CD4-positive, alpha-beta memory T cell (primary cell): ENCODE measurements at regions of chr20 and their contacts with region 1.

Region 1: DNA sequence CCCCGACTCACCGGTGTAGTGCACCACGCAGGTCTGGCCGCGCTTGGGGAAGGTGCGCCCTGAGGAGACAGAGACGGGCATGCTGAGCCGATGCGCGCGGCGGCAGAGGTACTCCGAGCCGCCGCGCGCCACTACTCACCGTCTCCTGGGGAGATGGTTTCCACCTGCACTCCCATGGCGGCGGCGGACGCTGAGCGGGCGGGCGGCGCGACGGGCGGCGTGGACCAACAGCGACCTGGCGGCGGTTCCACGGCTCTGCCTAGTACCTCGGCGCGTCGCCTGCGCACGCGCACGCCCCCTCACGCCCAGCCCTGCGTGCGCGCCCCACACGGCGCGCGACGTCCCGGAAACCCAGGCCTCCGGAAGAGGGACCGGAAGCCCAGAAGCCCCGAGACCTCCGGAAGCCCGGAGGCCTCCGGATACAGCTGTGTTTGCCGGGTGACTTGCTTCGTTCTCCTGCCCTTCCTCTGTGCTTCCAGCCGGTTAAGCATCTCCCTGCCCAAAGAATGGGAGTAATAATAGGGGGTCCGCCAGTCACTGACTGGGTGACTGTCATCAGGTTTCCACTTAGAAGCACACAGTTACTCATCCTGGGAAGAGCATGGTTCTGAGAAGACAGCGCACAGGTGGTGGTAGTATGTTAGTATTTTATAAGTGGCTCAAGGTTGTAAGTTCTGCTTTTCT is at the start of gene FKBP1A:
- DNase-seq: peak; percentile 90 to 91 (median 90)
- H3K4me3 ChIP-seq: peak within 1 kb of the TSS; percentile 58 to 80
- H3K4me3 Mint-ChIP-seq: peak within 1 kb of the TSS; percentile 87 to 98 (median 96)
- H3K27ac ChIP-seq: peak within 1 kb of the TSS; percentile 67
- H3K27ac Mint-ChIP-seq: peak within 1 kb of the TSS; percentile 88 to 98 (median 96)
- H3K4me1 ChIP-seq: peaks cover 51% of the 10 kb centered on the region
- H3K4me1 Mint-ChIP-seq: peaks cover 52 to 76% (median 63%) of the 10 kb centered on the region in 4 donors
- H3K27me3 ChIP-seq: no peaks in the 10 kb centered on the region
- H3K27me3 Mint-ChIP-seq: no peaks in the 10 kb centered on the region
- total RNA-seq, gene FKBP1A: 77.8 to 86.4 TPM

Region 2: GRCh38 chr20:844473-845225 is 548.3 kb before region 1 on chr20:
- CTCF ChIA-PET with region 1: no interaction called
- POLR2A ChIA-PET with region 1: no interaction called
- intact Hi-C with region 1: loop called (anchors 10 kb)
- DNase-seq: peak; percentile 81 to 96 (median 86)
- H3K4me3 ChIP-seq: peak overlapping the region; percentile 67 to 74
- H3K4me3 Mint-ChIP-seq: peak overlapping the region; percentile 87 to 93 (median 90)
- H3K27ac ChIP-seq: peak overlapping the region; percentile 70
- H3K27ac Mint-ChIP-seq: peak overlapping the region; percentile 70 to 89 (median 83)
- H3K4me1 ChIP-seq: peaks cover 68% of the 10 kb centered on the region
- H3K4me1 Mint-ChIP-seq: peaks cover 27 to 62% (median 45%) of the 10 kb centered on the region in 4 donors
- H3K27me3 ChIP-seq: no peaks in the 10 kb centered on the region
- H3K27me3 Mint-ChIP-seq: no peaks in the 10 kb centered on the region

Region 3: DNA sequence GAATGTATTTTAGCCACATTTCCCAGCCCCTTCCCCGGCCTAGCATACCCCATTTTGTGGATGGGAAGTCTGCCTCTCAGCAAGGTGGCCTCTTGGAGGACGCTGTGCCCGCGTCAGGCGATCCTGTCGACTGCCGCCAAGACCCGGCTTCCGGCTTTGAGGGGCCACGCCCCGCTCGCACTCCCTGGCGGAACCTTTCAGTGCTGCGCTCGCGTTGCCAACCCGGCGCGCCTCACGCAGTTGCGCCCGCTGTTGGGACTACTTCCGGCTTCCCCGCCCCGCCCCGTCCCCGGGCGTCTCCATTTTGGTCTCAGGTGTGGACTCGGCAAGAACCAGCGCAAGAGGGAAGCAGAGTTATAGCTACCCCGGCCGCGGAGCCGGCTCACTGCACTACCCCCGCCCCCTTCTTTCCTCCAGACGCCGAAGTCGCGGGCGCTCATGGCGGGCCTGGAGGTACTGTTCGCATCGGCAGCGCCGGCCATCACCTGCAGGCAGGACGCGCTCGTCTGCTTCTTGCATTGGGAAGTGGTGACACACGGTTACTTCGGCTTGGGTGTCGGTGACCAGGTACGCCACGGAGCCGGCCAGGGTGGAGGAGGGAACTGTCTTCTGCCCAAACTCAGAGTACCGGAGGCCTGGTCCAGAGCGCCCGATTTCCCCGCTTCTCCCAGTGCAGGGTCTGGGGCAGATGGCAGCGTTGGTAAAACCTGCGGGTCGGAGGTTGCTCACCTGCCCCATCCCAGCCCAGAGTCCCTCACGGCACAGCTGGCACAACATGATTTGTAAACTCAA is 274.4 kb before region 1 on chr20 and contains the start of gene PSMF1:
- CTCF ChIA-PET with region 1: no interaction called
- POLR2A ChIA-PET with region 1: no interaction called
- intact Hi-C with region 1: loop called (anchors 1 kb)
- DNase-seq: peak; percentile 95 to 98 (median 96)
- H3K4me3 ChIP-seq: peak within 1 kb of the TSS; percentile 85 to 99
- H3K4me3 Mint-ChIP-seq: peak within 1 kb of the TSS; percentile 91 to 97 (median 95)
- H3K27ac ChIP-seq: peak within 1 kb of the TSS; percentile 78
- H3K27ac Mint-ChIP-seq: peak within 1 kb of the TSS; percentile 91 to 97 (median 95)
- H3K4me1 ChIP-seq: peaks cover 52% of the 10 kb centered on the region
- H3K4me1 Mint-ChIP-seq: peaks cover 47 to 70% (median 58%) of the 10 kb centered on the region in 4 donors
- H3K27me3 ChIP-seq: no peaks in the 10 kb centered on the region
- H3K27me3 Mint-ChIP-seq: no peaks in the 10 kb centered on the region
- total RNA-seq, gene PSMF1: 118 to 123 TPM

Region 4: GRCh38 chr20:1225783-1226654 is 166.9 kb before region 1 on chr20 and contains the start of gene RAD21L1:
- CTCF ChIA-PET with region 1: no interaction called
- POLR2A ChIA-PET with region 1: no interaction called
- intact Hi-C with region 1: loop called (anchors 5 kb)
- DNase-seq: peak; percentile 52 to 81 (median 60)
- H3K4me3 ChIP-seq: peak within 1 kb of the TSS; percentile 44 to 59
- H3K4me3 Mint-ChIP-seq: peak within 1 kb of the TSS; percentile 82 to 91 (median 87)
- H3K27ac ChIP-seq: peak within 1 kb of the TSS; percentile 25
- H3K27ac Mint-ChIP-seq: peak within 1 kb of the TSS; percentile 68 to 91 (median 82)
- H3K4me1 ChIP-seq: peaks cover 17% of the 10 kb centered on the region
- H3K4me1 Mint-ChIP-seq: peaks cover 2 to 18% (median 10%) of the 10 kb centered on the region in 4 donors
- H3K27me3 ChIP-seq: peaks cover 10% of the 10 kb centered on the region
- H3K27me3 Mint-ChIP-seq: peaks cover 4 to 10% of the 10 kb centered on the region in 2 donors
- total RNA-seq, gene RAD21L1: 0.78 TPM in 1 of 2 experiments, not detected in the other

Region 5: DNA sequence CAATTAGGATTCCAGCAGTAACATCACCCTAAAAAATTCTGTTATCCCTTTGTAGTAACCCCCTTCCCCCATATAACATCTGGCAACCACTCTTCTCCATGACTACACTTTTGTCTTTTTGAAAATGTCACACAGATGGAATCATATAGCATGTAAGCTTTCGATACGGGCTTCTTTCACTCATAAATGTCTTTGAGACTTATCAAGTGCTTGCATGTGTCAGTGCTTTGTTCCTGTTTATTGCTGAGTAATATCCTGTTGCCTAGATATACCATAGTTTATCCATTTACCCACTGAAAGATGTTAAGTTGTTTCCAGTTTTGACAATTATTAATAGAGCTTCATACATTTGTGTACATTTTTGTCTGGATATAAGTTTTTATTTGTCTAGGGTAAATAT is 137.3 kb before region 1 on chr20:
- CTCF ChIA-PET with region 1: no interaction called
- POLR2A ChIA-PET with region 1: no interaction called
- intact Hi-C with region 1: no loop called
- DNase-seq: no peak
- H3K4me3 ChIP-seq: no peak overlapping the region
- H3K4me3 Mint-ChIP-seq: no peak overlapping the region
- H3K27ac ChIP-seq: no peak overlapping the region
- H3K27ac Mint-ChIP-seq: no peak overlapping the region
- H3K4me1 ChIP-seq: peaks cover 3% of the 10 kb centered on the region
- H3K4me1 Mint-ChIP-seq: peaks cover 4 to 11% (median 6%) of the 10 kb centered on the region in 4 donors
- H3K27me3 ChIP-seq: peaks cover 23% of the 10 kb centered on the region
- H3K27me3 Mint-ChIP-seq: peaks cover 3 to 6% of the 10 kb centered on the region in 2 donors

Region 6: DNA sequence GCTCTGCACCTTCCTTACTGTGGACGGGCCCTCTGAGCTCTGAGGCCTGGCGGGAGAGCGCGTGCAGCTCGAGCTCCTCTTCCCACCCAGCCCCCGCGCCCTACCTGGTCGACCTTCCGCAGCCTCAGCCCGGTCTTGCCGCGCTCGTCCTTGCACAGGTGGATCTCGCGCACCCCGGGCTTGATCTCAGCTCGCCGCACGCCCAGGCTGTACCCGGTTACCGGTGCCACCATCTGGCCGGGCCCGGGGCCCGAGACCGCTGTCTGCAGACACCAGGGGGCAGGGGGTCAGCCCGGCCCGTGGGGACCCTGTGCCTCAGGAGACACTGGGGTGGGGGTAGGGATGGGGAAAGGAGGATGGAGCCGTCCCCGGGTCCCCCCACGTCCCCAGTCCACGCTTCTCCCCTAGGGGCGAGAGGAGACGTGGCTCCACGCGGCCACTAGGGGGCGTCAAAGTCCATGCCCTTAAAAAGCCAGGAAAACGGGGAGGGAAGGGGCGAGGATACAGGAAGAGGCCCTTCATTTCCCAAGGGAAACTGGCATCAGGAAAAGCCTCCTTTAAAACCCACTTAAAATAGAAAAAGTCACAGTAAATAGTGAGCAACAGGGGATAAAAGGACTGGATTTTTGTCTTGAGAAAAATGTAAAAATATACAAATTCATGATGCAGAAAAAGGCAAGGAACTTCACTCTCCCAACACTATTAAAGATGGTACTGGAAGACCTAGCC is 79.6 kb before region 1 on chr20:
- CTCF ChIA-PET with region 1: interaction called, 6 read pairs
- POLR2A ChIA-PET with region 1: interaction called, 3 read pairs
- intact Hi-C with region 1: loop called (anchors 5 kb)
- DNase-seq: peak; percentile 54 to 59 (median 54)
- H3K4me3 ChIP-seq: no peak overlapping the region
- H3K4me3 Mint-ChIP-seq: no peak overlapping the region
- H3K27ac ChIP-seq: no peak overlapping the region
- H3K27ac Mint-ChIP-seq: peak overlapping the region in 1 of 7 donors; percentile 54
- H3K4me1 ChIP-seq: peaks cover 8% of the 10 kb centered on the region
- H3K4me1 Mint-ChIP-seq: peaks cover 4 to 10% (median 7%) of the 10 kb centered on the region in 4 donors
- H3K27me3 ChIP-seq: no peaks in the 10 kb centered on the region
- H3K27me3 Mint-ChIP-seq: no peaks in the 10 kb centered on the region

Region 7: GRCh38 chr20:1325173-1326030 is 67.6 kb before region 1 on chr20:
- CTCF ChIA-PET with region 1: interaction called, 3 read pairs
- POLR2A ChIA-PET with region 1: interaction called, 13 read pairs
- intact Hi-C with region 1: loop called (anchors 1 kb)
- DNase-seq: peak; percentile 98 to 99 (median 98)
- H3K4me3 ChIP-seq: peak overlapping the region; percentile 58 to 85
- H3K4me3 Mint-ChIP-seq: no peak overlapping the region
- H3K27ac ChIP-seq: peak overlapping the region; percentile 98
- H3K27ac Mint-ChIP-seq: no peak overlapping the region
- H3K4me1 ChIP-seq: peaks cover 42% of the 10 kb centered on the region
- H3K4me1 Mint-ChIP-seq: peaks cover 14 to 24% (median 19%) of the 10 kb centered on the region in 4 donors
- H3K27me3 ChIP-seq: no peaks in the 10 kb centered on the region
- H3K27me3 Mint-ChIP-seq: no peaks in the 10 kb centered on the region

Region 8: DNA sequence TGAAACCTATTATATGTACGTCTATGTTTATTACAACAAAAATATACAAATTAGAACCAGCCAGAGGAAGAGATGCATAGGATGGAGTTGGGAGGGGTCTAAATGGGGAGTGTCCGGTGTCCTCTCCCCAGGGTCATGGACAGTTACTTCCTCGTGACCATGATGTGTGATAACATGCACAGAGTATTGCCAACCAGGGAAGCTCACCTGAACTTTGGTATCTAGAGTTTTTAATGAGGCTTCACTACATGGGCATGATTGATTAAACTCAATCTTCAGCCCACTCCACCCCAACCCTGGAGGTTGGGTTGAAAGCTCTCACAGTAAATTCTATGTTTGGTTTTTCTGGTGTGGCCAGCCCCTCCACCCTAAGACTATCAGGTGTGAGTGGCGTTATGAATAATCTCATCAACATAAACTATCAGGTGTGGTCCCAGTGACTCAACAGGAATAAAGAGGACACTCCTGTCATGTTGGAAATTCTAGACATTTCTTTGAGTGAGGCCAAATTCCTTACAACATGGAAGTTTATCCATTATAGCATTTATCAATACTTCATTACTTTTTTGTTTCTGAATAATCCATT is 36.3 kb after region 1 on chr20:
- CTCF ChIA-PET with region 1: no interaction called
- POLR2A ChIA-PET with region 1: no interaction called
- intact Hi-C with region 1: no loop called
- DNase-seq: no peak
- H3K4me3 ChIP-seq: no peak overlapping the region
- H3K4me3 Mint-ChIP-seq: no peak overlapping the region
- H3K27ac ChIP-seq: no peak overlapping the region
- H3K27ac Mint-ChIP-seq: no peak overlapping the region
- H3K4me1 ChIP-seq: peaks cover 2% of the 10 kb centered on the region
- H3K4me1 Mint-ChIP-seq: peaks cover 1 to 17% (median 4%) of the 10 kb centered on the region in 4 donors
- H3K27me3 ChIP-seq: no peaks in the 10 kb centered on the region
- H3K27me3 Mint-ChIP-seq: peaks cover 0 to 7% of the 10 kb centered on the region in 2 donors

Region 9: DNA sequence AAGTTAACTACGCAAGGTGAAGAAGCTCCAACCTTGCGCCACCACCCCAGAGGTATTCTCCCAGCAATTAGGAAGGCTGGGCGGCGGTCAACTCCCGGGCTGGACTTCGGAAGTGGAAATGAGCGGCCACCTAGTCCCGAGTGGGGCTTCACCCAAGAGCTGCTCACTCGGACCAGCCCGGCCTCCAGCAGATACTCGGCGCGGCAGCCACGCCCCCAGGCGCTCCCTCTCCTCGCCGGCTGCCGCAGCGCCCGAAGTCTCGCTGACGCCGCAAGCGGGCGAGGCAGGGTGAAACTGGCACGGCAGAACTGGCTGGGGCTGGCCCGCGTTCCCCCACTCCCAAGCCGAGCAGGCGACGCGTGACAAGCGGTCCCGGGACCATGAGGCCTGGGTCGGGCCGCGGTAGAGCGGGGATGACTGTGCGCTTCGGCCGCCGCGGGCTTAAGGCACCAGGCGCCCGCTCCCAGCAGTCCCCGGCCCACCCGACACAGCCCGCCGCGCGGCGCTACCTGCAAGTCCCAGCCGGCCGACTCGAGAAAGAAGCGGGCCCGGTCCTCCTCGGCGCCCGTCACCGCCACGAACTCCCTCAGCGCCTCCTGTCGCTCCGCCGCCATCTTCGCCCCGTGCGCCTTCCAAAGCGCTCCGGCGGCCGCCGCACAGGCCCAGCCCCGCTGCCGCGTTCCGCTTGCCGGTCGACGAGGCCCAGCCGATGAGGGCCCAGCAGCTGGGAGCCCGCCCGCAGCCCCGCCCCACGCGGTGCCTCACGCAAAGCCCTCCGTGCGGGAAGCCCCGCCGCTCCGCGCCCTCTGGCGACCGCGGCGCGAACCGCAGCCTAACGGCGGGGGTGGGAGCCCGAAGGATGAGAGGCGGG is 73.5 kb after region 1 on chr20 and contains the start of gene NSFL1C:
- CTCF ChIA-PET with region 1: interaction called, 3 read pairs
- POLR2A ChIA-PET with region 1: interaction called, 19 read pairs
- intact Hi-C with region 1: loop called (anchors 1 kb)
- DNase-seq: peak; percentile 95 to 99 (median 97)
- H3K4me3 ChIP-seq: peak within 1 kb of the TSS; percentile 53 to 65
- H3K4me3 Mint-ChIP-seq: peak within 1 kb of the TSS; percentile 78 to 93 (median 88)
- H3K27ac ChIP-seq: peak within 1 kb of the TSS; percentile 89
- H3K27ac Mint-ChIP-seq: peak within 1 kb of the TSS; percentile 66 to 95 (median 91)
- H3K4me1 ChIP-seq: peaks cover 41% of the 10 kb centered on the region
- H3K4me1 Mint-ChIP-seq: peaks cover 34 to 49% (median 40%) of the 10 kb centered on the region in 4 donors
- H3K27me3 ChIP-seq: no peaks in the 10 kb centered on the region
- H3K27me3 Mint-ChIP-seq: peaks cover 1 to 5% of the 10 kb centered on the region in 2 donors
- total RNA-seq, gene NSFL1C: 57.5 to 65.8 TPM

Region 10: DNA sequence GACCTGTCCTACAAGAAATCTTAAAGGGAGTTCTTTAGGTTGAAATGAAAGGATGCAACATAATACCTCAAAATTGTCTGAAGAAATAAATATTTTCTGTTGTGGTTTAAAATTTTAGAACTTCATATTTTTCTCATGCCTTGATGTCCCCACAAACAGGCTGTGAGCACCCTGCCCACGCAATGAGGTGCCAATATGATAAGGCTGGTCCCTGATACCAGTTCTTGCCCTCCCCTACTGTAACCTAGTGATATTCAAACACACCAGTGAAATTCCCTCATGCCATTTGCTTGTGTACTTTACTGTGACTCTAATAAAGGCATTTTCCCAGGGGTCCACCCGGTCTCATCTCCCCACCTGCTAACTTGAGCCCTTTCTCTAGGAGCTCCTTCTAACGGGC is 331.9 kb after region 1 on chr20:
- CTCF ChIA-PET with region 1: no interaction called
- POLR2A ChIA-PET with region 1: no interaction called
- intact Hi-C with region 1: no loop called
- DNase-seq: no peak
- H3K4me3 ChIP-seq: no peak overlapping the region
- H3K4me3 Mint-ChIP-seq: no peak overlapping the region
- H3K27ac ChIP-seq: no peak overlapping the region
- H3K27ac Mint-ChIP-seq: no peak overlapping the region
- H3K4me1 ChIP-seq: peaks cover 4% of the 10 kb centered on the region
- H3K4me1 Mint-ChIP-seq: peaks cover 0 to 10% (median 4%) of the 10 kb centered on the region in 4 donors
- H3K27me3 ChIP-seq: no peaks in the 10 kb centered on the region
- H3K27me3 Mint-ChIP-seq: no peaks in the 10 kb centered on the region

Region 11: GRCh38 chr20:2460752-2461424 is 1067.9 kb after region 1 on chr20:
- CTCF ChIA-PET with region 1: no interaction called
- POLR2A ChIA-PET with region 1: no interaction called
- intact Hi-C with region 1: no loop called
- DNase-seq: no peak
- H3K4me3 ChIP-seq: no peak overlapping the region
- H3K4me3 Mint-ChIP-seq: no peak overlapping the region
- H3K27ac ChIP-seq: no peak overlapping the region
- H3K27ac Mint-ChIP-seq: no peak overlapping the region
- H3K4me1 ChIP-seq: no peaks in the 10 kb centered on the region
- H3K4me1 Mint-ChIP-seq: no peaks in the 10 kb centered on the region
- H3K27me3 ChIP-seq: no peaks in the 10 kb centered on the region
- H3K27me3 Mint-ChIP-seq: no peaks in the 10 kb centered on the region